Testis (tissue), 5 donors: ENCODE measurements at regions of chr20 and their contacts with region 1.

Region 1: DNA sequence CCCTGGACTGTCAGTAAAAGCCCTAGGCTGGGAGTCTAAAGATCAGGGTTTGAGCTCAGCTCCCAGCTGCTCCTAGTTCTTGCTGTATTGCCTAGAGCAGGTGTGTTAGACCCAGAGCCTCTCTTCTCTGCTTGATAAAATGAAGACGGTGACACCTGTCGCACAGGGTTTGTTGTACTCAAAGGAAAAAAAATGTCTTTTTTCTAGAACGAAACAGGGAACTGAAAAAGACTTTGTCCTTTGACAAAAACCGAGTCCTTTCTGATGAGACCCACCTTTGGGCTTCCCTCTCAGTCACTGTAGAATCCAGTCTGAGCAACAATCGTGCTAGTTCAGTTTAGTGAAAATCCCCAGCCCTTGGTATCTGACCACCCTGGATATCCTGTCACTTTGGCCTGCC is 102.1 kb upstream of the LAMP5 start:
- DNase-seq: no peak
- H3K4me3 ChIP-seq: no peak overlapping the region
- H3K27ac ChIP-seq: no peak overlapping the region
- H3K4me1 ChIP-seq: no peaks in the 10 kb centered on the region
- H3K27me3 ChIP-seq: no peaks in the 10 kb centered on the region
- CTCF ChIP-seq: no peak
- POLR2A ChIP-seq: no peak

Region 2: GRCh38 chr20:9442858-9443257 is 30.5 kb after region 1 on chr20:
- intact Hi-C with region 1: no loop called
- DNase-seq: no peak
- H3K4me3 ChIP-seq: no peak overlapping the region
- H3K27ac ChIP-seq: no peak overlapping the region
- H3K4me1 ChIP-seq: no peaks in the 10 kb centered on the region
- H3K27me3 ChIP-seq: no peaks in the 10 kb centered on the region
- CTCF ChIP-seq: no peak
- POLR2A ChIP-seq: no peak

Region 3: DNA sequence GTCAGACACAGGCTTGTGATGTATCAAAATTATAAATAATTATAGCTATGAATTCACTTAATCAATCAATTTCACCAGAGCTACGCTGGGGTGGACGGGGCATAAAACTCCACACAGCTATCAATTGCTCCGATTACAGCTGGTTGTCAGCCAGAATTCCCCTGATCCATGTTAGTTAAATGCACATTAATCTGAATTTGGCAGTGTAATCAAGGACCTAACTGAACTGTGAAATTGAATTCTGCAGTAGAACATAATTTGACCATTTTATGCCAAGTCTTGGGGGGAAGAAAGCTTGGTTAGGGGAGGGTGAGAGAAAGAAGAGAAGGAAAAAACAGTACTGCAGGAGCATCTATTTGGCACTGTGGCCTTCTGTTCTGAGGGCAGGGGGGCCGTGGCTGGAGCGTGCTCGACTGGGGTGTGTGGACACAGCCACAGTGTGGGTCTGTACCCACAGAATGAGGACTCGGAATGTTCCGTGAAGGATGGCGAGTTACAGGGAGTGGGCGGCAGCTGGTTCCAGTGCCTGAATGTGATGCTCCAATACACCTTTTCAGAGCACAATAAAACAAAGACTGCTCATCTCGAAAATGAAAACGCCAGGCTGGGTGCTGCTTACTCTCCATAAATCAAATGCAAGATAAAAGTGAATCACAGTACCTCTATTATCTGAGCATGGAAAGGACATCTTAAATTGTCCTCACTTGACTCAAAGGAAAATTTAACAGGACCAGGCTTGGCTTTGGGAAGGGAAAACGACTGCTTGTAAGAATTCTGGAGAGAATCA is 161.2 kb after region 1 on chr20:
- intact Hi-C with region 1: no loop called
- DNase-seq: no peak
- H3K4me3 ChIP-seq: no peak overlapping the region
- H3K27ac ChIP-seq: no peak overlapping the region
- H3K4me1 ChIP-seq: no peaks in the 10 kb centered on the region
- H3K27me3 ChIP-seq: no peaks in the 10 kb centered on the region
- CTCF ChIP-seq: no peak
- POLR2A ChIP-seq: no peak

Region 4: DNA sequence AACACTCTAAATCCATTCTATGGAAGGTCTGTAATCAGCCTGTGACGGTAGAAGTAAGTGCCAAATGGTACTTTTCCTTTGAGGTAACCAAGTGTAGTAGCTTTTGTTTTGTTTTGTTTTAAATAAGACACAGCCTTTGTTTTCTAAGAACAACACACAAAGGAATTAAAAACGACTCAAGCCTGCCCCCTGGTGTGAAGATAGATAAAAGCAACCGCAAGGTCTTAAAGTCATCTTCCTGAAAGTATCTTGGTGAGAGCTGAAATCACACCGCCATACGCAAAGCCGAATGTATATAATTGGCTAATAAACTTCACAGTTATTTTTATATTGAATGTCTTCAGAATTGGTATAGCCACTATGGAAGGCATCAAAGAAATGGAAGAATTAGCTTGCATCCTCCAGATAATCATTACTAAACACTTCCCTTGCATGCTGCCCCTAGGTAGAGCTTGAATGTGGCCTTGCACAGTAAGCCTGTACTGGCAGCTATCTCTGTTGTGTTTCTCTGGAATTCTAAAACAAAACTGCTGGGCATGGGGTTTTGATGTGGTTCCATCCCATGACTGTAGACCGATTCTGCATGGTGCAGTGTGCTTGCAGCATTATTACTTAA is 197.7 kb after region 1 on chr20:
- intact Hi-C with region 1: loop called (anchors 5 kb)
- DNase-seq: peak; percentile 73
- H3K4me3 ChIP-seq: no peak overlapping the region
- H3K27ac ChIP-seq: no peak overlapping the region
- H3K4me1 ChIP-seq: no peaks in the 10 kb centered on the region
- H3K27me3 ChIP-seq: no peaks in the 10 kb centered on the region
- CTCF ChIP-seq: peak; percentile 54 to 78 (median 71)
- POLR2A ChIP-seq: no peak